ENCODE measurements at regions of chr3 and their contacts with region 1.

Region 1: GRCh38 chr3:114519415-114519814 is 225.6 kb downstream of the TIGIT start:
- DNase-seq: peak in 3 of 35 experiments; percentile 0 to 30 (median 7)
- ATAC-seq: peak in 3 of 4 experiments; percentile 6 to 69 (median 27)
- H3K4me3 ChIP-seq: no peak overlapping the region
- H3K4me3 Mint-ChIP-seq: no peak overlapping the region
- H3K27ac ChIP-seq: no peak overlapping the region
- H3K27ac Mint-ChIP-seq: no peak overlapping the region
- H3K4me1 ChIP-seq: no peaks in the 10 kb centered on the region
- H3K4me1 Mint-ChIP-seq: peaks cover 0 to 10% (median 0%) of the 10 kb centered on the region in 3 donors
- H3K27me3 ChIP-seq: no peaks in the 10 kb centered on the region
- H3K27me3 Mint-ChIP-seq: no peaks in the 10 kb centered on the region

Region 2: DNA sequence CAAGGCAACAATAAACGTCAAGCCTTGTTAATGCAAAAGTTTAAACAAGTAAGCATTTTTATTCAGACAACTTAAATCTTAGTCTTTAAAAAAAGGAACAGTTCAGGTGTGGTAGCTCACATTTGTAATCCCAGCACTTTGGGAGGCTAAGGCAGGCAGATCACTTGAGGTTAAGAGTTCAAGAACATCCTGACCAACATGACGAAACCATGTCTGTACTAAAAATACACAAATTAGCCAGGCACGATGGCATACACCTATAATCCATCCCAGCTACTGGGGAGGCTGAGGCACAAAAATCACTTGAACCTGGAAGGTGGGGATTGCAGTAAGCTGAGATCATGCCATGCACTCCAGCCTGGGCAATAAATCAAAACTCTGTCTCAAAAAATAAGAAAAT is 607.8 kb after region 1 on chr3:
- CTCF ChIA-PET with region 1: interaction called in 1 of 2 experiments, 10 read pairs
- POLR2A ChIA-PET with region 1: no interaction called
- DNase-seq: no peak
- ATAC-seq: no peak
- H3K4me3 ChIP-seq: no peak overlapping the region
- H3K4me3 Mint-ChIP-seq: no peak overlapping the region
- H3K27ac ChIP-seq: no peak overlapping the region
- H3K27ac Mint-ChIP-seq: no peak overlapping the region
- H3K4me1 ChIP-seq: no peaks in the 10 kb centered on the region
- H3K4me1 Mint-ChIP-seq: peaks cover 9 to 34% (median 30%) of the 10 kb centered on the region in 3 donors
- H3K27me3 ChIP-seq: no peaks in the 10 kb centered on the region
- H3K27me3 Mint-ChIP-seq: no peaks in the 10 kb centered on the region